Activated T-helper 1 cell treated with anti-CD3 and anti-CD28 coated beads, Interleukin-12 subunit alpha, Interleukin-12 subunit beta, Interleukin-2, Interleukin-4 antibody, amounts not matched to agents 30 ng/mL and 10 ng/mL and 1 ng/mL, durations not matched to agents 14 hours and 24 hours and 36 hours (primary cell): ENCODE measurements at regions of chr19 and their contacts with region 1.

Region 1: DNA sequence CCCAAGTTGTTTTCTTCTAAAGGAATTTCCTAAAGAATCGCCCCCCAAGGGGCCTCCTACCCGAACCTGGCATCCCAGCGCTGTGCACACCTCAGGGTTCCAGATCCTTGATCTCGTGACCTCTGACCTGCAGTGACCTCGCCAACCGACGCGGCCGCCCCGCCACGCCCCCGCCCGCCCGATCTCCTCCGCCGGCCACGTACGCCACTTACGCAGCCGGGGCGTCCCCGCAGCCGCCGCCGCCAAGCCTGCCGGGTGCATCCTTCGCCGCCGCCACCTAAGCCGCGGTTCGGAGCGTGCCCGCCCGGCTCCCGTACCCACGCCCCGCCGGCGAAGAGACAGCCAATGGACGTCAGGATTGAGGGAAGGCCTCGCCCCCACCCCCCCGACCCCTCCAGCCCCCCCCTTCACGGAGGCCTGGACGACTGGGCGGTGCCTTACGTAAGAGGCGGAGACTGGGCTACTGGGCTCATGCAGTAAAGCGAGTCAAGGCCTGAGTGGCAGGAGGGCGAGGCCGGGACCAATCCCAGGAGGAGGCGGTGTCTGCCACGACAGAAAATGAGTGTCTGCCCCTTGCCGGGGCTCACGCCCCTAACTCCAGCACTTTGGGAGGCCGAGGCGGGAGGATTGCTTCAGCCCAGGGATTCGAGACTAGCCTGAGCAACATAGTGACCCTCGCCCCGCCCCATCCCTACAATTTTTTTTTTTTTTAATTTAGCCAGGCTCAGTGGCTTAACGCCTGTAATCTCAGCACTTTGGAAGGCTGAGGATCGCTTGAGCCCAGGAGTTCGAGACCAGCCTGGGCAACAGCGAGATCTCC is at the start of gene YIF1B:
- DNase-seq: peak; percentile 94
- H3K4me3 Mint-ChIP-seq: peak within 1 kb of the TSS; percentile 85
- H3K27ac Mint-ChIP-seq: peak within 1 kb of the TSS; percentile 96
- H3K4me1 Mint-ChIP-seq: peaks cover 46% of the 10 kb centered on the region
- H3K27me3 Mint-ChIP-seq: no peaks in the 10 kb centered on the region
- total RNA-seq, gene YIF1B: 89.8 and 96.0 TPM in 2 replicates

Region 2: DNA sequence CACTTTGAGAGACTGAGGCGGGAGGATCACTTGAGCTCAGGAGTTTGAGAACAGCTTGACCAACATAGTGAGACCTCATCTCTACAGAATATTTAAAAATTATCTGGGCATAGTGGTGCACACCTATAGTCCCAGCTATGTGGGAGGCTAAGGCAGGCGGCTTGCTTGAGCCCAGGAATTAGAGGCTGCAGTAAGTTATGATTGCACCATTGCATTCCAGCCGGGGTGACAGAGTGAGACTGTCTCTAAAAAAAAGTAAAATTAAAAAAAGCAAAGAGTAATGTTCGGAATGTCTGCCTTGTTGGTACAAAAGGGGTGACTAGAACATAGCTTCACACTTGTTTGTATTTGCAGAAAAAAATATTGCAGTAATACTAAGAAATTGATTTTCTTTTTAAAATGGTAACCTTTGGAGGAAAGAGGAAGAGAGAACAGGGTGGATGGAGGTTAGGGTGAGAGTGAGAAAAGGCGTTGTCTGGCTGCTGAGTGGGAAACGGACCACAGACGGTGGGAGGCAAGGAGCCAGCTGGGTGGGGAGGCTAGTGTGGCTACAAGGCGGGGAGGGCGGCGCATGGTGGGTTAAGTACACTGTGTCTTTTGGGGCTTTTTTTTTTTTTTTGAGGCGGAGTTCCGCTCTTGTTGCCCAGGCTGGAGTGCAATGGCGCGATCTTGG is 69.9 kb before region 1 on chr19:
- intact Hi-C with region 1: loop called (anchors 1 kb)
- DNase-seq: no peak
- H3K4me3 Mint-ChIP-seq: no peak overlapping the region
- H3K27ac Mint-ChIP-seq: no peak overlapping the region
- H3K4me1 Mint-ChIP-seq: peaks cover 10% of the 10 kb centered on the region
- H3K27me3 Mint-ChIP-seq: no peaks in the 10 kb centered on the region

Region 3: DNA sequence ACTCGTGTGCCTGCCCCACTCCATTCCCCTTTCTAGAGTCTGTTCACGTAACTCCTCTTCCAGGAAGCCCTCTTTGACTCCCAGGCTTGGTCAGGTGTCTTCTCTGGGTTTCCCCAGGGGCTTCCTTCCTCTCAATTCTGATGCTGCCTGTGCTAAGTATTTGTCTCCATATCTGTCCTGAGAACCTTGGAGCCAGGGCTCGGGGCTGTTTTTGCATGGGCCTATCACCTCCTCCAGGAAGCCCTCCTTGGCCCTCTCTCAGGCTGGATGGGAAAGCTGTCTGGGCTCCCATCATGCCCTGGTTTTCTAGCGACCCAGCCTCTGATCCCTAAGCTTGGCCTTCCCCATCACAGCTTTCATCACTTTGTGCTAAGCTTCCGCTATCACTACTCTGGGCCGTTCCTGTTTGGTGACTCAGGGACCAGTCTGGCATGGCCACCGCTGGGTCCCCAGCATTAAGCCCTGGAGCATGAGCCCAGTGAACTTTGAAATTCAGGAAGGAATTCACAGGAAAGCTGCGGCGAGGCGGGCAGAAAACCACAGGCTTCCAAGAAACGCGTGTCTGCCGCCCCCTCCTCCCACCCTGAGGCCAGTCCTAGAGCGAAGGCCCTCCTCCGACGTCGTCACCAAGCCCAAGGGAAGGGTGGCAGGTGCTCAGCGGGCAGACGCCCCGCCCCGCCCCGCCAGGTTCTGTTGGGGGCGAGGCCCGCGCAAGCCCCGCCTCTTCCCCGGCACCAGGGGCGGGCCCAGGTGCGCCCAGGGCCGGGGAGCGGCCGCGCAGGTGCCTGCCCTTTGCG is 52.0 kb before region 1 on chr19:
- intact Hi-C with region 1: loop called (anchors 1 kb)
- DNase-seq: peak; percentile 74
- H3K4me3 Mint-ChIP-seq: peak overlapping the region; percentile 90
- H3K27ac Mint-ChIP-seq: peak overlapping the region; percentile 98
- H3K4me1 Mint-ChIP-seq: peaks cover 51% of the 10 kb centered on the region
- H3K27me3 Mint-ChIP-seq: no peaks in the 10 kb centered on the region

Region 4: DNA sequence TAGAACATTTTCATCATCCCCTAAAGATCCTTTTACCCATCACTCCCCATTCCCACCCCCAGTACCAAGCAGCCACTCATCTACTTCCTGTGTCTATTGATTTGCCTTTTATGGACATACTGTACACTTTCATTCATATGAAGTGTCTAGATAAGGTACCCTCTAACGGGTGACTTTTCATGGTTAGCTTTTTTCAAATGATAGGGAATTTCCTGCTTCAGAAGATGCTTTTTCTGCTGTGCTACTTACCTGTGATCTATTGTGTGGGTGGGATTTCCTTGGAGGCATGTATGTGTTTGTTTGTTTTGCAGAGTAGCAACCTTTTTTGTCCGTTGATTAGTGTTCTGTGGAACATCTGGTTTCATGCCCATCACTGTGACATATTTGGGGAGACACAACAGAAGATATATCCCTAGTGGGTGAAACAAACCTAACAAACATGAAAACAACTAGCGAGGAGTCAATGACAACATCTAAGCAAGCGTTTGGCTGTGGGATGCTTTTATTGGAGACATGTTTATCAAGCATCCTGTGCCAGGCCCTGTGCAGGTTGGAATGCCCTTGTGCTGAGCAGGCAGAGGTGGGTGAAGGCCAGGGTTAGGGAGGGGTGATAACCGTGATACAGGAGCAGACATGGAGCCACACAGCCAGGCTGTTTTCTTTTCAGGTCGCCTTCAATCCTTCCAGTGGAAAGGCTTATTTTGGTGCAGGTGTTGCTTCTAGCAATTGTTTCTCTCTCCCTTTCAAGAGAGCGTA is 33.9 kb before region 1 on chr19:
- intact Hi-C with region 1: loop called (anchors 1 kb)
- DNase-seq: no peak
- H3K4me3 Mint-ChIP-seq: no peak overlapping the region
- H3K27ac Mint-ChIP-seq: peak overlapping the region; percentile 95
- H3K4me1 Mint-ChIP-seq: peaks cover 24% of the 10 kb centered on the region
- H3K27me3 Mint-ChIP-seq: no peaks in the 10 kb centered on the region

Region 5: GRCh38 chr19:38329651-38330050 is 13.8 kb after region 1 on chr19:
- intact Hi-C with region 1: no loop called
- DNase-seq: no peak
- H3K4me3 Mint-ChIP-seq: no peak overlapping the region
- H3K27ac Mint-ChIP-seq: no peak overlapping the region
- H3K4me1 Mint-ChIP-seq: no peaks in the 10 kb centered on the region
- H3K27me3 Mint-ChIP-seq: no peaks in the 10 kb centered on the region

Region 6: GRCh38 chr19:38361633-38362075 is 45.8 kb after region 1 on chr19:
- intact Hi-C with region 1: loop called (anchors 1 kb)
- DNase-seq: peak; percentile 69
- H3K4me3 Mint-ChIP-seq: peak overlapping the region; percentile 90
- H3K27ac Mint-ChIP-seq: peak overlapping the region; percentile 61
- H3K4me1 Mint-ChIP-seq: peaks cover 22% of the 10 kb centered on the region
- H3K27me3 Mint-ChIP-seq: peaks cover 30% of the 10 kb centered on the region